GM12878 (cell line): ENCODE measurements at regions of chr11 and their contacts with region 1.

Region 1: GRCh38 chr11:95739108-95739938 is 50.3 kb downstream of the FAM76B start:
- DNase-seq: no peak
- ATAC-seq: peak; percentile 76
- H3K4me3 ChIP-seq: no peak overlapping the region
- H3K27ac ChIP-seq: no peak overlapping the region
- H3K4me1 ChIP-seq: no peaks in the 10 kb centered on the region
- H3K27me3 ChIP-seq: no peaks in the 10 kb centered on the region
- CTCF ChIP-seq: peak in 2 of 3 experiments; percentile 28 to 31; a peak in 2 of 6 replicates
- EP300 ChIP-seq: no peak
- POLR2A ChIP-seq: no peak
- RAD21 ChIP-seq: peak; percentile 13; the same call in 1 of the 2 replicates

Region 2: DNA sequence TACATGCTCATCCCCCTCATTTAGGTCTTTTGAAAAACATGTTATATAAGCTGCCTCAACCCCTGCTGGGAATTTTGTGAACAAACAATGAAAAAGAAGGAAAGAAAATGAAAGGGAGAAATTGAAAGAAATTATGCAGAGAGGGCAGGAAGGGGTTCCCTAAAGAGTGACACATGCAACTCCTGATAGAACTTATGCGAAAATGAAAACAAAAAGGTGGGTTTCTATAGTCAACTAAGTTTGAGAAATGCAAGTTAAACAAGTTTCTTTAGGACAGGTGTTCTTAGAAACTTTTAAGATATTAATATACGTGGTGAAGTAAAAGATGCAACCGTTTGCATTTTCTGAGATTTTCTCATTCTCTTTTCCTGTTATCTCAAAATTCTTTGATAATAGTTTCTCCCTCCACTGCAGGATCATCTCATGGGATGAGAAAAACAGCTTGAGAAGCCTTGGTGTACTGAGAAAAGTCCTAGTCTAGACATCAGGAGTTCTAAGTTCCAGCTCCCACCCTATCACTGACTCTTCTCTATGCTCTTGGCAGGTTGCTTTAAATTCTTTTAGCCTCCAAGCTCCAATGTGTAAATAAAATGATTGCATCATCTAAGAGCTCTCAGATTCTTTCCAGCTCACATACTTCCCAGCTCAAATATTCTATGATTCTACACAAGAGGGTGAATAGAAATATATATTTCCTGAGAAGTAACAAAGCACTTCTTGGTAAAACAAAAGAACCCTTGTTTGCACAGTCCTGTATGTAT is 59.0 kb before region 1 on chr11:
- CTCF ChIA-PET with region 1: no interaction called
- POLR2A ChIA-PET with region 1: no interaction called
- RAD21 ChIA-PET with region 1: no interaction called
- SMC1A ChIA-PET with region 1: no interaction called
- in situ Hi-C with region 1: no loop called
- intact Hi-C with region 1: no loop called
- DNase-seq: no peak
- ATAC-seq: peak; percentile 79
- H3K4me3 ChIP-seq: no peak overlapping the region
- H3K27ac ChIP-seq: no peak overlapping the region; the same call in 1 of the 2 replicates
- H3K4me1 ChIP-seq: peaks cover 7% of the 10 kb centered on the region
- H3K27me3 ChIP-seq: no peaks in the 10 kb centered on the region
- CTCF ChIP-seq: no peak
- EP300 ChIP-seq: no peak
- POLR2A ChIP-seq: no peak
- RAD21 ChIP-seq: no peak

Region 3: DNA sequence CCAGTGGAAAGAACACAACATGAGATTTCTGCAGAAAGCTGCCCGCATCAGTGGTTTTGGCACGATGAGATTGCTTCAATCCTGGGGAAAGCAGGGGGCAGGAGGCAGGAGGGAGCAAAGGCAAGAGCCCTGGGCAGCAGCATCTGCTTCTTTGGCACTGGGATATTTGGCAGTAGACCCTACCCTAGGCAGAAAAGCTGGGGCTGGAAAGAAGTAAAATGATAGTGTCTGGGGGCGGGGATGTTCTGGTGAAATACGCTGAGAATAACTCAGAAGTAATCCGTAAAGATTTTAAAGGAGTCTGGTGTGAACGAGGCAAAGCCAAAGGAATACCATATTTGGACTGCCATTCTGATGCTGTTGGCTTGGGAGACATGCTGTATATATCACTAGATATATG is 11.7 kb before region 1 on chr11:
- CTCF ChIA-PET with region 1: interaction called, 11 read pairs
- POLR2A ChIA-PET with region 1: interaction called, 4 read pairs
- RAD21 ChIA-PET with region 1: no interaction called
- SMC1A ChIA-PET with region 1: interaction called, 4 read pairs
- in situ Hi-C with region 1: no loop called
- intact Hi-C with region 1: no loop called
- DNase-seq: no peak
- ATAC-seq: no peak
- H3K4me3 ChIP-seq: no peak overlapping the region
- H3K27ac ChIP-seq: no peak overlapping the region
- H3K4me1 ChIP-seq: no peaks in the 10 kb centered on the region
- H3K27me3 ChIP-seq: no peaks in the 10 kb centered on the region
- CTCF ChIP-seq: no peak
- EP300 ChIP-seq: no peak
- POLR2A ChIP-seq: no peak
- RAD21 ChIP-seq: no peak

Region 4: GRCh38 chr11:96075532-96075959 is 336.2 kb after region 1 on chr11:
- CTCF ChIA-PET with region 1: no interaction called
- POLR2A ChIA-PET with region 1: no interaction called
- RAD21 ChIA-PET with region 1: no interaction called
- SMC1A ChIA-PET with region 1: no interaction called
- in situ Hi-C with region 1: no loop called
- intact Hi-C with region 1: no loop called
- DNase-seq: peak; percentile 74
- ATAC-seq: peak; percentile 93
- H3K4me3 ChIP-seq: 0 out of 2 replicates have a peak overlapping the region, but pooled peaks have one; percentile 30
- H3K27ac ChIP-seq: peak overlapping the region; percentile 62
- H3K4me1 ChIP-seq: peaks cover 27% of the 10 kb centered on the region
- H3K27me3 ChIP-seq: no peaks in the 10 kb centered on the region
- CTCF ChIP-seq: no peak
- EP300 ChIP-seq: peak; percentile 17 to 36; a peak in 1 of 4 replicates
- POLR2A ChIP-seq: no peak
- RAD21 ChIP-seq: no peak